GM12878 (cell line): ENCODE measurements at regions of chr1 and their contacts with region 1.

Region 1: DNA sequence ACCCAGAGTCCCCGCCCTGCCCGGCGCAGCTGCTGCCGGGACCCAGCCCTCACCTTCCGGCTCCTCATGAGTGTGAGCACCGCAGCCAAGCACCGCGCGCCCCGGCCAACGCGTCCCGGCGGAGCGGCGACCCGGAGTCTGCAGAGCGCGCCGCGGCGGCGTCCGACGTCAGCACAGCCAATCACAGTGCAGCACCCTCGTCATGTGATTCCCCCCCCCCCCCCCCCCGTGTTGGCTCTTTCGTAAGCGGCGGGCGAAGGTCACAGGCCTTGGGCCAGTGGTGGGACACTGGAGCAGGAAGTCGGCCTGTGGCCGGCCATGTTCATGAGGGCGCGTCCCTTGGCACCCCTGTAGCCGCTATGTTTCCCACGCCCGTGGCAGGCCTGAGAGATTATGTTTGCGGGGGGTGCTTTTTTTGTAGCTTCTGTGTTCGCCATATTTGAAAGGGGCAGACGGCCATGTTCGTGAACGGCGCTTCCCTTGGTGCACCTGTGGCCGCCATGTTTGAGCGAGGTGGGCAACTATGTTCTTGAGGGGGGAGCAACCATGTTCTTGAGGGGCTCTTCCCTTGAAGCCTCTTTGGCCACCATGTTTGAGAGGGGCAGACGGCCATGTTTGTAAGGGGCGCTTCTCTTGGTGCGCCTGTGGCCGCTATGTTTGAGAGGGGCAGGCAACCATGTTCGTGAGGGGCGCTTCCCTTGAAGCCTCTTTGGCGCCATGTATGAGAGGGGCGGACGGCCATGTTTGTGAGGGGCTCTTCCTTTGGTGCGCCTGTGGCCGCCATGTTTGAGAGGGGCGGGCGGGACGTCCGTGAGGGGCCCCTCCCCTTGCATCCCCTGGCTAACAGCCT is at the start of gene C1orf174:
- DNase-seq: peak; percentile 94
- ATAC-seq: peak; percentile 88
- H3K4me3 ChIP-seq: peak within 1 kb of the TSS; percentile 82
- H3K27ac ChIP-seq: peak within 1 kb of the TSS; percentile 93
- H3K4me1 ChIP-seq: no peaks in the 10 kb centered on the region
- H3K27me3 ChIP-seq: no peaks in the 10 kb centered on the region
- CTCF ChIP-seq: no peak
- EP300 ChIP-seq: no peak
- POLR2A ChIP-seq: peak; percentile 85
- RAD21 ChIP-seq: no peak
- polyA plus RNA-seq, gene C1orf174: 17.5 to 20.9 TPM

Region 2: GRCh38 chr1:3796215-3797061 is 103.9 kb before region 1 on chr1 and contains the start of gene LRRC47:
- CTCF ChIA-PET with region 1: no interaction called
- POLR2A ChIA-PET with region 1: no interaction called
- RAD21 ChIA-PET with region 1: interaction called, 4 read pairs
- SMC1A ChIA-PET with region 1: no interaction called
- in situ Hi-C with region 1: no loop called
- intact Hi-C with region 1: loop called (anchors 5 kb)
- DNase-seq: peak; percentile 58
- ATAC-seq: peak; percentile 99
- H3K4me3 ChIP-seq: peak within 1 kb of the TSS; percentile 70
- H3K27ac ChIP-seq: peak within 1 kb of the TSS; percentile 51
- H3K4me1 ChIP-seq: peaks cover 18% of the 10 kb centered on the region
- H3K27me3 ChIP-seq: no peaks in the 10 kb centered on the region
- CTCF ChIP-seq: no peak
- EP300 ChIP-seq: peak; percentile 8 to 34; a peak in 1 of 4 replicates
- POLR2A ChIP-seq: peak; percentile 95
- RAD21 ChIP-seq: no peak
- polyA plus RNA-seq, gene LRRC47: 2.5 to 4.5 TPM

Region 3: GRCh38 chr1:3856908-3857790 is 43.2 kb before region 1 on chr1 and contains the starts of genes CEP104 and DFFB:
- CTCF ChIA-PET with region 1: interaction called, 9 read pairs
- POLR2A ChIA-PET with region 1: interaction called, 4 read pairs
- RAD21 ChIA-PET with region 1: interaction called, 6 read pairs
- SMC1A ChIA-PET with region 1: interaction called, 7 read pairs
- in situ Hi-C with region 1: no loop called
- intact Hi-C with region 1: loop called (anchors 1 kb)
- DNase-seq: peak; percentile 91
- ATAC-seq: peak; percentile 98
- H3K4me3 ChIP-seq: peak within 1 kb of the TSS; percentile 95
- H3K27ac ChIP-seq: peak within 1 kb of the TSS; percentile 40
- H3K4me1 ChIP-seq: peaks cover 3% of the 10 kb centered on the region; the same call in 1 of the 2 replicates
- H3K27me3 ChIP-seq: no peaks in the 10 kb centered on the region
- CTCF ChIP-seq: peak; percentile 45 to 86 (median 55); a peak in 5 of 6 replicates
- EP300 ChIP-seq: no peak
- POLR2A ChIP-seq: peak; percentile 80
- RAD21 ChIP-seq: peak; percentile 59
- polyA plus RNA-seq, gene CEP104: 7.2 to 11.3 TPM
- polyA plus RNA-seq, gene DFFB: 2.7 to 3.7 TPM